SK-N-SH (cell line): ENCODE measurements at regions of chr12 and their contacts with region 1.

Region 1: GRCh38 chr12:71938728-71939385 is at the start of gene TPH2:
- DNase-seq: peak; percentile 63
- H3K4me3 ChIP-seq: no peak within 1 kb of the TSS
- H3K27ac ChIP-seq: no peak within 1 kb of the TSS
- H3K4me1 ChIP-seq: peaks cover 0 to 17% of the 10 kb centered on the region in 2 experiments; a peak in 2 of 4 replicates
- H3K27me3 ChIP-seq: no peaks in the 10 kb centered on the region
- CTCF ChIP-seq: peak; percentile 67
- EP300 ChIP-seq: no peak
- RAD21 ChIP-seq: peak; percentile 77
- polyA plus RNA-seq, gene TPH2: not detected in 2 replicates

Region 2: GRCh38 chr12:71846322-71846940 is 92.4 kb before region 1 on chr12:
- CTCF ChIA-PET with region 1: interaction called, 11 read pairs
- POLR2A ChIA-PET with region 1: no interaction called
- DNase-seq: peak; percentile 15
- H3K4me3 ChIP-seq: no peak overlapping the region
- H3K27ac ChIP-seq: no peak overlapping the region
- H3K4me1 ChIP-seq: peaks cover under 1 to 10% of the 10 kb centered on the region in 2 experiments; a peak in 2 of 4 replicates
- H3K27me3 ChIP-seq: no peaks in the 10 kb centered on the region
- CTCF ChIP-seq: peak; percentile 74
- EP300 ChIP-seq: no peak
- RAD21 ChIP-seq: peak; percentile 42; the same call in 1 of the 2 replicates

Region 3: DNA sequence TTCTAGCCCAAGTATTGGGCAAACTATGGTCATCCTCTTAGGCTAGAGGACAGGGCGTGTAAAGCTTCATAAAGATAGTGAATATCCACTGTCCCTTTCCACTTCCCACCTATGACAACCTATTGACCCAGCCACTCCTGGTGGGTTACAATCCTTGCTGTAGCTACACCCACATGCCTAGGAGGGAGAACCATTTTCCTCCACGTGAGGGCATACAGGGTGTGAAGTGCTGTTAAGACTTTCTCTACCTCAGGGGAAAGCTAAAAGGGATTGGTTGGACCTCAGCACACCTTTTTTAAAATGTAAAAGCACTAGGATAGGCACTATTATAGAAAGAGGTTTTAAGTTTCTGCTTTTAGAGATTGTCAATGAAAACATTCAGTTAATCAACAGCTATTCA is 124.2 kb after region 1 on chr12:
- CTCF ChIA-PET with region 1: no interaction called
- POLR2A ChIA-PET with region 1: no interaction called
- DNase-seq: no peak
- H3K4me3 ChIP-seq: no peak overlapping the region
- H3K27ac ChIP-seq: no peak overlapping the region
- H3K4me1 ChIP-seq: no peaks in the 10 kb centered on the region
- H3K27me3 ChIP-seq: no peaks in the 10 kb centered on the region
- CTCF ChIP-seq: no peak
- EP300 ChIP-seq: no peak
- RAD21 ChIP-seq: no peak